ENCODE measurements at regions of chr1 and their contacts with region 1.

Region 1: DNA sequence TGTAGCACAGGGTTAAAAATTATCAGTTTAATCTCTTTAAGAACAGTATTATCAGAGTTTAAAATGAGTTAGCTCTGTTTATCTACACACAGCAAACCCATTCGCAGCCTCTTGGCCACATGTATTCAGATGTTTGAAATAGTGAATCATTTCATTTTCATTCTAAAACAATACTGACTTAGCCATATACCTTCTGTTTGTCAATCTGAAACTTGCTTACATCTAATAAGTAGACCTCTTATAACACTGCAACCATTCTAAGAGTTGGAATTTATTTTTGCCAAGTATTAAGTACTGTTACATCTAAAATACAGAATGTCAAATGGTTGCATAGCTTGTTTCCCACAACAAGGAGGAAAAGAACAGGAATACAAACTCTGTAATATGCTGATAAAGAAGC is 25.4 kb downstream of the ANGEL2 start:
- H3K4me3 Mint-ChIP-seq: no peak overlapping the region
- H3K27ac Mint-ChIP-seq: no peak overlapping the region
- H3K4me1 Mint-ChIP-seq: no peaks in the 10 kb centered on the region
- H3K27me3 Mint-ChIP-seq: no peaks in the 10 kb centered on the region

Region 2: GRCh38 chr1:212814537-212815334 is 175.5 kb before region 1 on chr1:
- intact Hi-C with region 1: loop called (anchors 2 kb)
- H3K4me3 Mint-ChIP-seq: no peak overlapping the region
- H3K27ac Mint-ChIP-seq: no peak overlapping the region
- H3K4me1 Mint-ChIP-seq: peaks cover 10% of the 10 kb centered on the region
- H3K27me3 Mint-ChIP-seq: no peaks in the 10 kb centered on the region

Region 3: GRCh38 chr1:212920896-212921295 is 69.4 kb before region 1 on chr1:
- intact Hi-C with region 1: loop called (anchors 2 kb)
- H3K4me3 Mint-ChIP-seq: no peak overlapping the region
- H3K27ac Mint-ChIP-seq: no peak overlapping the region
- H3K4me1 Mint-ChIP-seq: peaks cover 17% of the 10 kb centered on the region
- H3K27me3 Mint-ChIP-seq: peaks cover 41% of the 10 kb centered on the region

Region 4: DNA sequence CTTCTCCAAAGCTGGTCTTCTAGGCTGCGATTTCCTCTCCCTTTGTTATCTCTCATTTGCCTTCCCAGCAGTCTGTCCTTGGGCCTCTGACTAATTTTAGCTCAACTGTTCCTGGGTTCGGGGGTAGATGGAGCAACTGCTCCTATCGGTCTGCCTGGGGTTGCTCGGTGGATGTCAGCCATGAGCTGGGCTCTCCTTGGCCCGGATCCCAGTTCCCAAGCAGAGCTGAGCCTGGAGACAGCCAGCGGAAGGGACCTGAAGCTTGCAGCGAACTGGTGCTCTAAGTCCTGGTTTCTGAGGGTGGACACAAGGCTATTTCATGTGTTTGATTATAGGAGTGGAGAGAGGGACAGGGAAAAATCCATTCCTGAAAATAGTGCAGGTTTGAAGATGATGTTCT is 483.8 kb after region 1 on chr1:
- intact Hi-C with region 1: no loop called
- H3K4me3 Mint-ChIP-seq: no peak overlapping the region
- H3K27ac Mint-ChIP-seq: no peak overlapping the region
- H3K4me1 Mint-ChIP-seq: no peaks in the 10 kb centered on the region
- H3K27me3 Mint-ChIP-seq: no peaks in the 10 kb centered on the region